Activated T-helper 2 cell treated with anti-CD3 and anti-CD28 coated beads, Interferon-gamma antibody, Interleukin-2, Interleukin-4, amounts not matched to agents 10 μg/mL and 5 μg/mL and 100 μg/mL, durations not matched to agents 14 hours and 24 hours and 36 hours (primary cell): ENCODE measurements at regions of chr1 and their contacts with region 1.

Region 1: GRCh38 chr1:38052750-38053410 is 6.3 kb upstream of the POU3F1 start:
- DNase-seq: no peak
- H3K4me3 Mint-ChIP-seq: no peak overlapping the region
- H3K27ac Mint-ChIP-seq: no peak overlapping the region
- H3K4me1 Mint-ChIP-seq: peaks cover 9% of the 10 kb centered on the region
- H3K27me3 Mint-ChIP-seq: peaks cover 13% of the 10 kb centered on the region

Region 2: GRCh38 chr1:38039331-38040088 is 13.4 kb before region 1 on chr1:
- intact Hi-C with region 1: loop called (anchors 1 kb)
- DNase-seq: no peak
- H3K4me3 Mint-ChIP-seq: no peak overlapping the region
- H3K27ac Mint-ChIP-seq: no peak overlapping the region
- H3K4me1 Mint-ChIP-seq: peaks cover 3% of the 10 kb centered on the region
- H3K27me3 Mint-ChIP-seq: peaks cover 29% of the 10 kb centered on the region